SK-N-SH (cell line): ENCODE measurements at regions of chr5 and their contacts with region 1.

Region 1: GRCh38 chr5:135457424-135458071 is 5.4 kb upstream of the TIFAB start:
- DNase-seq: peak; percentile 80
- H3K4me3 ChIP-seq: peak overlapping the region in 1 of 2 experiments; percentile 25; a peak in 1 of 4 replicates
- H3K27ac ChIP-seq: no peak overlapping the region
- H3K4me1 ChIP-seq: no peaks in the 10 kb centered on the region; a peak in 1 of 4 replicates
- H3K27me3 ChIP-seq: peaks cover 44% of the 10 kb centered on the region
- CTCF ChIP-seq: peak; percentile 80
- EP300 ChIP-seq: no peak
- RAD21 ChIP-seq: peak; percentile 50

Region 2: GRCh38 chr5:135426102-135427082 is 31.2 kb before region 1 on chr5:
- CTCF ChIA-PET with region 1: interaction called, 11 read pairs
- POLR2A ChIA-PET with region 1: no interaction called
- DNase-seq: peak; percentile 69
- H3K4me3 ChIP-seq: no peak overlapping the region; a peak in 1 of 4 replicates
- H3K27ac ChIP-seq: no peak overlapping the region
- H3K4me1 ChIP-seq: no peaks in the 10 kb centered on the region
- H3K27me3 ChIP-seq: no peaks in the 10 kb centered on the region
- CTCF ChIP-seq: peak; percentile 79
- EP300 ChIP-seq: no peak
- RAD21 ChIP-seq: peak; percentile 73

Region 3: DNA sequence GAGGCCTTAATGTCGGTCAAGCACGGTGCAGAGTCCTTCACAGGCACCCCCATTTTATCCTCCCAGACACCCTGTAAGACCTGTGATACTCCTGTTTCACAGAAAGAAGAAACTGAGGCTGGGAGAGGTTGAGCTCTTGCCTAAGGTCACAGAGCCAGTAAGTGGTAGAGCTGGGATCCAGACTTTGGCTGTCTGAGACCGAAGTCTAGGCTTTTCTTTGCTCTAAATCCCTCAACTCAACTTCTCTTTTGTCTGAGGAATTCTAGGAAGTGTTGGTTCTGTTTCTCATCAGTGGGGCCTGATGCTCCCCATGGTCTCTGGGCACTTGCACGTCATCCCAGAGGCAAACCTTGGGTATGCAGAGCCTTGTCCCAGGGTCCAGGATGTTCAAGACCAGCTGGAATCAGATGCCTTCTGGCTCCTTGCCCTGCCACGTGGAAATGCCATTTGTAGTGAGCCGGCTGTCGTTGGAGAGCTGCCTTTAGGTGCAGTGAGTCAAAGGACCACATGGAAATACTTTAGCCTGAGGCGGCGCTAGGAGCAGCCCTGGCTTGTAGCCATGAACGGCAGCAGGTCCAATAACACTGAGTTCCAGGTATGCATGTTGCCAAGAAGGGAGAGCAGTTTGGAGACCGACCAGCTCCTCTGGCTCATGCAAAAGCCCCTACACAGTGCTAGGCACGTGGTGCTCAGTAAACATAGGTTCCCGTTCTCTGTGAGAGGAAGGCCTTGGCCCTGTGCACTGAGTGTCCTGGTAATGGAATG is 19.6 kb before region 1 on chr5:
- CTCF ChIA-PET with region 1: interaction called, 60 read pairs
- POLR2A ChIA-PET with region 1: no interaction called
- DNase-seq: no peak
- H3K4me3 ChIP-seq: no peak overlapping the region
- H3K27ac ChIP-seq: peak overlapping the region; percentile 11 to 55; a peak in 1 of 4 replicates
- H3K4me1 ChIP-seq: peaks cover 0 to 42% of the 10 kb centered on the region in 2 experiments; a peak in 1 of 4 replicates
- H3K27me3 ChIP-seq: no peaks in the 10 kb centered on the region
- CTCF ChIP-seq: no peak
- EP300 ChIP-seq: peak in 1 of 2 experiments; percentile 38; a peak in 1 of 4 replicates
- RAD21 ChIP-seq: no peak

Region 4: DNA sequence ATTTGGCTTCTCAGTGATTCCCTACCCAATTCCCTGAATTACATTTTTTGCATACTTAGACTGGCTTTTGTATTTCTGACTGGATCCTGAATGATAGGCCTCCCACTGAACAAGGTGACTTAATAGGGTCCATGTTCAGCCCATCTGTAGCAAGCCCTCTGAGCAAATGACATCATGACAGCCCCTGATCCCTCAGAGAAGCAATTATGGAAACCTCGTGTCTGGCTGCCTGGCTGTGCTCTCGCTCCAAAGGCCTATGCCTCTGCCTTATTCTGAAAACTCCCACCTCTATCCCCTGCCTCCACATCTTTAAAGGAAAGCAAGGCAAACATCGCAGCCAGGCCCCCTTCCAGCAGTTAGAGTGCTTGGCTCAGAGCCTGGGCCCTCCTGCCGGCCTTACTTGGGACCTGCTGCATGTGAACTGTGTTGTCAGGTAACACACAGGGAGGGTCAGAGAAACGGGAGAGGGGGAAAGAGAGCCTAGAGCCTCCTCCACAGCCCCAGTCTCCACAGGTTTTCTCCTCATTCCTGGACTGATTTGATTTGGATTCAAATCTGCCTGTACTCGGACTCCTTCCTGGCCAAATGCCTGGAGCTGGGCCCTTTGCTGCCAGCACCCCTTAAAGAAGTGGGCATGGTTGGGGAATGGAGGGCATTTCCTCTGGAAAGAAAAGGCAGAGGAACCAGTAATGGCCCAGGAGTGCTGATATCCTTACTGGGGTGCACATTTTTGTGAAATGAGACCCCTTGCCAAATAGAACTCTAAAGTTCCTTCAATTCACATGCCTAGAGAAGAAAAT is 14.2 kb before region 1 on chr5:
- CTCF ChIA-PET with region 1: interaction called, 60 read pairs
- POLR2A ChIA-PET with region 1: no interaction called
- DNase-seq: no peak
- H3K4me3 ChIP-seq: no peak overlapping the region
- H3K27ac ChIP-seq: no peak overlapping the region
- H3K4me1 ChIP-seq: peaks cover 0 to 23% of the 10 kb centered on the region in 2 experiments; a peak in 1 of 4 replicates
- H3K27me3 ChIP-seq: no peaks in the 10 kb centered on the region
- CTCF ChIP-seq: no peak
- EP300 ChIP-seq: no peak
- RAD21 ChIP-seq: no peak

Region 5: GRCh38 chr5:135543485-135544304 is 86.1 kb after region 1 on chr5:
- CTCF ChIA-PET with region 1: interaction called, 791 read pairs
- POLR2A ChIA-PET with region 1: no interaction called
- DNase-seq: peak; percentile 69
- H3K4me3 ChIP-seq: peak overlapping the region; percentile 19 to 25; a peak in 3 of 4 replicates
- H3K27ac ChIP-seq: no peak overlapping the region
- H3K4me1 ChIP-seq: no peaks in the 10 kb centered on the region; a peak in 1 of 4 replicates
- H3K27me3 ChIP-seq: peaks cover 86% of the 10 kb centered on the region
- CTCF ChIP-seq: no peak
- EP300 ChIP-seq: no peak
- RAD21 ChIP-seq: no peak

Region 6: DNA sequence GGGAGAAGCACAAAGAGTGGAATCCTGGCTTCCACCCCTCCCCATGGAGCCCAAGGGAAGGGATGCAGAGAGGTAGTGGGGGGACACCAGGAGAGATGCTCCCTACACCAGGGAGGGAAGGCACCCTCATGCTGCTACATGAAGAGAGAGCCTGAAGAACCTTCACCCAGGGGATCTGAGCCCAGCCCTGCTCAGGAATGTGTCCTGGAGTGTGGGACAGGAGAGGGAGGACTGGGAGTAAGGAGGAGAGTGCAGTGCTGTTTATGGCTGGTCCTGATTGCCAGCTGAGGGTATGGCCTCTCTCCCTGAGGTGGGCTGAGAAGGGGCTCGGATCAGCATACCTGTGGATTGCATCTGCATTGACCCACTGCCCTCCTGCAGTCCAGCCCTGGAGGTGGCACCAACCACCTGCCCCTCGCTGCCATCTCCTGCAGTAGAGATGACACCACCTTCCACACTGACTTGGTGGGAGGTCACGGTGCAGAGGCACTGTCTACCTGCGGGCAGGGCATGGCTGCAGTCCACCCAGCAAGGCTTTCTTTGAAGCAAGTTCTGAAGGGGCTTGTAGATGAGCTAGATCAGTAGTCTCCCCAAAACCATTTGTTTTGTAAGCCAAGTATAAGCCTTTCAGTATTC is 262.0 kb after region 1 on chr5:
- CTCF ChIA-PET with region 1: no interaction called
- POLR2A ChIA-PET with region 1: no interaction called
- DNase-seq: no peak
- H3K4me3 ChIP-seq: no peak overlapping the region
- H3K27ac ChIP-seq: no peak overlapping the region
- H3K4me1 ChIP-seq: no peaks in the 10 kb centered on the region
- H3K27me3 ChIP-seq: peaks cover 7% of the 10 kb centered on the region; the same call in 1 of the 2 replicates
- CTCF ChIP-seq: no peak
- EP300 ChIP-seq: no peak
- RAD21 ChIP-seq: no peak